ENCODE measurements at regions of chr12 and their contacts with region 1.

Region 1: DNA sequence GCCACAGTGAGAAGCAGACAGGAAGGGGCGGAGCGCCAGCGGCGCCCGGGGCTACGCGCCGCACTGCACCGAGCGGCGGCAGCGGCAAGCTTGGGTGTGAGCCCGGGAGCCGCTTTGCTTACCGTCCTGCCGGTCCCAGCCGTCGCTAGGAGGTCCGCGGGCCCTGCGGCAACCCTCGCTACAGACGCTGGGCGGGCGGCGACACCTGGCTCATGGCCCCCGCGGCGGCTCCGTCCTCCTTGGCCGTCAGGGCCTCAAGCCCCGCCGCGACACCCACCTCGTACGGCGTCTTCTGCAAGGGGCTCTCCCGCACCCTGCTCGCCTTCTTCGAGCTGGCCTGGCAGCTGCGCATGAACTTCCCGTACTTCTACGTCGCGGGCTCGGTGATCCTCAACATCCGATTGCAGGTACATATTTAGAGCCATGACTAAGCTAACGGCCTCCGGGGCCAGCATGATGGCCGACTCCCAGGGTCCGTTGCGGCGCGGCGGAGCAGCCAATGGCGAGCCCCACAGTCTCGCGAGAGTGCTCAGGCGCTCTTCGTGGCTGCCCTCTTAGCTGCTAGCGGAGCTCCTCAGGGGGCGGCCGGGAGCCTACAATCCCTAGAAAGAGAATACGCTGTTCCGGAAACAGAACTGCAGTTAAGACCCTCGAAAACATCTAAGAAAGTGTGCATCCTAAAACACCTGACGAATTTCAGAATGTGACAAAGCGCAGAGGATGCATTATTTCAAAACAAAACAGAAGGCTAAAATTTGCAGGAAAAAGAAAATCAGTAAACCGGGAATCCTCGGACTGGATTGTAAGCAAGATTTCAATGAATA is at the start of gene SMIM10L1:
- DNase-seq: peak; percentile 77 to 88 (median 83)
- ATAC-seq: peak; percentile 97
- H3K4me3 ChIP-seq: peak within 1 kb of the TSS; percentile 74
- H3K4me3 Mint-ChIP-seq: peak within 1 kb of the TSS; percentile 94 to 100 (median 98)
- H3K27ac ChIP-seq: peak within 1 kb of the TSS; percentile 72
- H3K27ac Mint-ChIP-seq: peak within 1 kb of the TSS; percentile 97 to 100 (median 99)
- H3K4me1 ChIP-seq: peaks cover 30 to 36% of the 10 kb centered on the region in 2 donors
- H3K4me1 Mint-ChIP-seq: peaks cover 53 to 82% (median 72%) of the 10 kb centered on the region in 7 donors
- H3K27me3 ChIP-seq: no peaks in the 10 kb centered on the region
- H3K27me3 Mint-ChIP-seq: no peaks in the 10 kb centered on the region
- total RNA-seq, gene SMIM10L1: 7.8 to 12.9 (median 8.5) TPM

Region 2: DNA sequence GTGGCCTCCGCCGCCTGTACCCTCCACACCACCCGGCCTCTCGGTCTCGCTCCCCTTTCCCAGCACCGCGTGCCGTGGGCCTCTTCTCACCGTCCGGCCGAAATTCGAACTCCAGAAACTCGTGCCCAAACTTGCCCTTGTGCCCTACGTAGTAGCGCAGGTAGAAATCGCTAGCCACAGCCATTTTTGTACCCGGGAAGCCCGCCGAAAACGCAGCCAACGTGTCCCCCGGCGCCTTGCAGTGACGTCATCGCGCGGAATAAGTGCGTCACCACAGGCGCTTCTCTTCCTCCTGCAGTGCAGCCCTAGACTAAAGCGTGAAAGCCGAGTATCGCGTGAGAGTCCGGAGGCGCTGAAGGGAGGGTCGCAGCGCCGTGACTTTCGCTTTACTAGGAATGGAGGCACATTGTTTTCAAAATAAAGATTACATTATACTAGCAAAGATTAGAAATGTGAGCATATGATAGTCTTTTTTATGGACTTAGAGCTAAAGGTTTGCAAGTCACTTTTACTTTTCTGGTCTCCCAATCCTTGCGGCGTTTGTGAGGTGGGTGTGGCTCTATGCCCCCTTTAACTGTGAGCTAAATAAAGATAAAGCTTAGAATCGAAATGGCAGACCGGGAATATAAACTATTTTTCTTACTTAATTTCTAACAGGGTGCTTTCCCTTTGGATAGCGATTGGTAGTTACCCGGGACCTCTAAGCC is 557.9 kb before region 1 on chr12 and contains the start of gene MAGOHB:
- CTCF ChIA-PET with region 1: no interaction called
- POLR2A ChIA-PET with region 1: interaction called, 8 read pairs
- intact Hi-C with region 1: loop called (anchors 1 kb)
- DNase-seq: peak; percentile 94 to 100 (median 97)
- ATAC-seq: peak; percentile 96
- H3K4me3 ChIP-seq: peak within 1 kb of the TSS; percentile 74
- H3K4me3 Mint-ChIP-seq: peak within 1 kb of the TSS; percentile 93 to 100 (median 98)
- H3K27ac ChIP-seq: peak within 1 kb of the TSS; percentile 93
- H3K27ac Mint-ChIP-seq: peak within 1 kb of the TSS; percentile 97 to 100 (median 100)
- H3K4me1 ChIP-seq: peaks cover 4 to 11% of the 10 kb centered on the region in 2 donors
- H3K4me1 Mint-ChIP-seq: peaks cover 12 to 38% (median 33%) of the 10 kb centered on the region in 7 donors
- H3K27me3 ChIP-seq: no peaks in the 10 kb centered on the region
- H3K27me3 Mint-ChIP-seq: peaks cover 0 to 26% (median 7%) of the 10 kb centered on the region in 5 donors
- total RNA-seq, gene MAGOHB: 12.1 to 43.1 (median 24.8) TPM

Region 3: GRCh38 chr12:10721651-10722501 is 449.5 kb before region 1 on chr12:
- CTCF ChIA-PET with region 1: no interaction called
- POLR2A ChIA-PET with region 1: no interaction called
- intact Hi-C with region 1: loop called in 1 of 2 experiments (anchors 1 kb)
- DNase-seq: peak; percentile 45 to 84 (median 74)
- ATAC-seq: peak; percentile 83
- H3K4me3 ChIP-seq: peak overlapping the region; percentile 83
- H3K4me3 Mint-ChIP-seq: peak overlapping the region; percentile 80 to 96 (median 93)
- H3K27ac ChIP-seq: peak overlapping the region; percentile 61
- H3K27ac Mint-ChIP-seq: peak overlapping the region; percentile 48 to 96 (median 87)
- H3K4me1 ChIP-seq: peaks cover 9 to 19% of the 10 kb centered on the region in 2 donors
- H3K4me1 Mint-ChIP-seq: peaks cover 14 to 43% (median 21%) of the 10 kb centered on the region in 7 donors
- H3K27me3 ChIP-seq: peaks cover 0 to 4% of the 10 kb centered on the region in 2 donors
- H3K27me3 Mint-ChIP-seq: peaks cover 20 to 60% (median 44%) of the 10 kb centered on the region in 5 donors

Region 4: DNA sequence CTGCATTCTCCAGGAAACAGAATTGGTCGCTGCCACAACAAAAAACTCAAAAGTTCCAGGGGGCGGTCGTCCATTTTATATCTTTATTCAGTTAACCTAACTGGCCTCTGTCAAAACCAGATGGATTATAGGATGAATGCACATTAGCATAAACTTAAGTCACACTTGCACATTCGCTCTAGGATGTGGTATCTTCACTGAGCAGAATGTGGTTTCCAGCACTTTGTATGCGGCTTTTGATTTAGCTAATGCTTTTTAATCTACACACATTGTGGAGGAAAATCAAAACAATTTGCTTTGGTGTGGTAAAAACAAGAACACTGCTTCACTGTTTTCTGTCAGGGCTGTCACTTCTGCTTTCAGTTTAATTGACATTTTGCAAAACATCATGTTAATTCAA is 189.1 kb before region 1 on chr12:
- CTCF ChIA-PET with region 1: no interaction called
- POLR2A ChIA-PET with region 1: interaction called, 5 read pairs
- intact Hi-C with region 1: loop called (anchors 1 kb)
- DNase-seq: peak in 8 of 9 donors; percentile 28 to 91 (median 83)
- ATAC-seq: peak; percentile 97
- H3K4me3 ChIP-seq: no peak overlapping the region
- H3K4me3 Mint-ChIP-seq: peak overlapping the region in 7 of 10 donors; percentile 6 to 61 (median 40)
- H3K27ac ChIP-seq: no peak overlapping the region
- H3K27ac Mint-ChIP-seq: peak overlapping the region in 3 of 9 donors; percentile 30 to 40 (median 34)
- H3K4me1 ChIP-seq: peaks cover 16 to 22% of the 10 kb centered on the region in 2 donors
- H3K4me1 Mint-ChIP-seq: peaks cover 12 to 61% (median 55%) of the 10 kb centered on the region in 7 donors
- H3K27me3 ChIP-seq: no peaks in the 10 kb centered on the region
- H3K27me3 Mint-ChIP-seq: peaks cover 0 to 71% (median 6%) of the 10 kb centered on the region in 5 donors

Region 5: DNA sequence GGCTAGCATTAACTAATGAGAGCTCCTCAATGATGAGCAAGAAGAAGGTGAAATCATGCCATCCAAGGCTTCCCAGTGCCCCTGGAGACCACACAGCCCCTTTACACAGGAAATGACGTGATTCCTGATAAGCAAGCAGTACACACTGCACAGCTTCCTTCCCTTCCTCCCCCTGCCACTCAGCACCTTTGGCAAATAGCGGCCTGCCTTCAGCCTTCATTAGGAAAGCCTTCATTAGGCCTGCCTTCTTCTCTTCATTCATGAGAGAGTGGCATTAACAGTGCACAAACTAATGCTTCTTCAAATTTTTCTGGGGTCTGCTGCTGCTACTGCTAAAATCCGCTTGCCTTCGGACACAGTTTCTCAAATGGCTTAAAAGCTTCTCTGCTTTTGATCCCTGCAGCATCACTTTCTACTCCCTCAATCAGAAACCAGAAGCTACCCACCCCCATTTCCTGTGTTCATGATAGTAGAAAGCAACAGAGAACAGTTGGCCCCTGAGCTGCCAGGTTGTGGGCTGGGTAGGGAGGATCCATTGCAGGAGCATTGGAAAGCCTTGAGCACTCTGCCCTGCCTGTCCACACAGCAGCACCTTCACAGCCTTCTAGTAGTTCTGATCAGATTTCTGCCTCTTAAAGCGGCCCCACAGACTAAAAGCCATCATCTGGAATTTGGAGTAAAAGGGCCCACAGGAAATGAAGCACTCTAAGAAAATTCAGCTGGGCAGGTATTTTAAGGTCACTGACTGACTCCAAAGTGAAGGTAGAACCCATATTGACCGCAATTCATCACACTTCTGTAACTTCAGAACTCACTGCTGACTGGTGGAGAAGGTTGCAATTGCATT is 374.4 kb after region 1 on chr12:
- CTCF ChIA-PET with region 1: no interaction called
- POLR2A ChIA-PET with region 1: interaction called, 13 read pairs
- intact Hi-C with region 1: loop called in 1 of 2 experiments (anchors 1 kb)
- DNase-seq: peak in 8 of 9 donors; percentile 50 to 87 (median 81)
- ATAC-seq: peak; percentile 87
- H3K4me3 ChIP-seq: peak overlapping the region; percentile 50
- H3K4me3 Mint-ChIP-seq: peak overlapping the region; percentile 74 to 84 (median 80)
- H3K27ac ChIP-seq: peak overlapping the region; percentile 81
- H3K27ac Mint-ChIP-seq: peak overlapping the region; percentile 92 to 99 (median 96)
- H3K4me1 ChIP-seq: peaks cover 28 to 69% of the 10 kb centered on the region in 2 donors
- H3K4me1 Mint-ChIP-seq: peaks cover 31 to 88% (median 68%) of the 10 kb centered on the region in 7 donors
- H3K27me3 ChIP-seq: no peaks in the 10 kb centered on the region
- H3K27me3 Mint-ChIP-seq: peaks cover 0 to 5% (median 0%) of the 10 kb centered on the region in 5 donors

Region 6: GRCh38 chr12:12266873-12267741 is 1095.8 kb after region 1 on chr12 and contains the start of gene LRP6:
- CTCF ChIA-PET with region 1: no interaction called
- POLR2A ChIA-PET with region 1: no interaction called
- intact Hi-C with region 1: loop called in 1 of 2 experiments (anchors 2 kb)
- DNase-seq: peak; percentile 57 to 83 (median 75)
- ATAC-seq: peak; percentile 91
- H3K4me3 ChIP-seq: peak within 1 kb of the TSS; percentile 86
- H3K4me3 Mint-ChIP-seq: peak within 1 kb of the TSS; percentile 79 to 93 (median 88)
- H3K27ac ChIP-seq: peak within 1 kb of the TSS; percentile 68
- H3K27ac Mint-ChIP-seq: peak within 1 kb of the TSS; percentile 29 to 88 (median 73)
- H3K4me1 ChIP-seq: peaks cover 8 to 10% of the 10 kb centered on the region in 2 donors
- H3K4me1 Mint-ChIP-seq: peaks cover 14 to 40% (median 31%) of the 10 kb centered on the region in 7 donors
- H3K27me3 ChIP-seq: peaks cover 0 to 10% of the 10 kb centered on the region in 2 donors
- H3K27me3 Mint-ChIP-seq: peaks cover 0 to 53% (median 14%) of the 10 kb centered on the region in 5 donors
- total RNA-seq, gene LRP6: 1.6 to 12.6 (median 7.4) TPM